ENCODE measurements at regions of chr7 and their contacts with region 1.

Region 1: GRCh38 chr7:44999245-45000095 is 531 bp upstream of the CCM2 start:
- DNase-seq: peak; percentile 96 to 100 (median 99)

Region 2: GRCh38 chr7:44885394-44886317 is 113.8 kb before region 1 on chr7 and contains the start of gene PURB:
- intact Hi-C with region 1: loop called (anchors 5 kb)
- DNase-seq: peak; percentile 90 to 99 (median 93)

Region 3: DNA sequence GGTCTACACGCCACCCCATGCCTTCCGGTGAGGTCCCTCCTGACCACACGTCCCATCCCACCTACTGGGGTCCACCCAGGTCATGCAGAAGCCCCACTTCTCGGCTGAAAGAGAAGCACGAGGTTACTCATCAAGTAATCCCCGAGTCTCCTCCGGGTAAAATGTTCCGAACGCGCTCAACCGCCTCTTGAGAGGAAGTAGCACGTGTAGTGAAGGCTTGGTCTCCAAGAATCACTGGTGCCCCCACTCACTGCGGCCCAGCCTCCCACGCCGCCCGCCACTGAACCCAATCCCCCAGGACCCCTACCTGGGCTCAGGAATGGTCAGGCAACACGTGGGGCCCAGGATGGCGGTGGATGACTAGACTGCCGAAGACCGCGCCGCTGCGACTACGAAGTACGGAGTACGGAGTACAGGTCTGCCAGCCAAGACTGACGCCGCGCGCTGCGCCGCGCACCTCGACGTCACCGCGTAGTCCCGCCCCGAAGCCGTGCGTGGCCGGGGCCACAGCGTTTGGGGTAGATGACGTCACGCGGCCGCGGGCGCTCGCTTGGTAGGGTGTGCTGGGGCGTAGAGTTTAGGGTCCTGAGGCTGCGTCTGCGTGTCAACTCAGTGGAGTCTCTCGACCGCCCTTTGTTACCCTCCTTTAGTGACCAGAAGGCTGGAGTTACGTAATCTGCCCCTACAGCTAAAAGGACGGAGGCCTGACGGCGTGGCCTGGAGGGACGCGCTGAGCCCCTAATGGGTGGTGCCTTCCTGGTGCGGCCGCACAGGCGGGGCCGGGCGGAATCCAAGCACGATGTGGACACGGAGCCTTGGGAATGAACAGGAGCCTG is 13.0 kb before region 1 on chr7:
- intact Hi-C with region 1: loop called (anchors 2 kb)
- DNase-seq: peak; percentile 80 to 99 (median 92)

Region 4: DNA sequence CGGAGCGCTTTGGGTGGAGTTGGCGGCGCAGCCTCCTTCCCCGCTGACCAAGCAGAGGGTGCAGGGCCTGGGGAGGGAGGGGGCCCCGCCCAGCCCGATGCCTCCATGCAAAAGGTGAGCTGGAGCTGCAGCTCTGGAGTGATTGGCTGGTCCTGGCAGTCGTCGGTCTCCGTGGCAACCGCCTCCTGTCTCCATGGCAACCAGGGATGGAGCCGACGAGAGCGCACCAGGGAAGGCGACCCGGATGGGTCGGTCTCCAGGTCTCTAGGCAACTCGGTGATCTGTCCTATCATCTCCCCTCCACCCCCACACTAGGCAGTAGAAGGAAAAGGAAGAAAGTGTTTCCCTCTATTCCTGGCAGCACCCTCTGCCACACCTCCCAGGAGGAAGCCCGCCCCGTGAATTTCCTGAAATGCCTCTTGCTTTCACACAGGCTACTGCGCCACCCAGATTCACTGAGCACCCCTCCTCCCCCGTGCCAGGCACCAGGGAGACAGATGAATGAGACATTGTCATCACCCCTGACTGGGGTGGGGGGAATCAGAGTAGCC is 89.9 kb after region 1 on chr7:
- intact Hi-C with region 1: loop called (anchors 5 kb)
- DNase-seq: peak; percentile 93 to 100 (median 98)

Region 5: GRCh38 chr7:45111298-45112223 is 112.1 kb after region 1 on chr7 and contains the start of gene TBRG4:
- intact Hi-C with region 1: loop called (anchors 5 kb)
- DNase-seq: peak; percentile 89 to 99 (median 92)

Measured in posterior cingulate gyrus (tissue), 11 donors.